ENCODE measurements at regions of chr9 and their contacts with region 1.

Region 1: DNA sequence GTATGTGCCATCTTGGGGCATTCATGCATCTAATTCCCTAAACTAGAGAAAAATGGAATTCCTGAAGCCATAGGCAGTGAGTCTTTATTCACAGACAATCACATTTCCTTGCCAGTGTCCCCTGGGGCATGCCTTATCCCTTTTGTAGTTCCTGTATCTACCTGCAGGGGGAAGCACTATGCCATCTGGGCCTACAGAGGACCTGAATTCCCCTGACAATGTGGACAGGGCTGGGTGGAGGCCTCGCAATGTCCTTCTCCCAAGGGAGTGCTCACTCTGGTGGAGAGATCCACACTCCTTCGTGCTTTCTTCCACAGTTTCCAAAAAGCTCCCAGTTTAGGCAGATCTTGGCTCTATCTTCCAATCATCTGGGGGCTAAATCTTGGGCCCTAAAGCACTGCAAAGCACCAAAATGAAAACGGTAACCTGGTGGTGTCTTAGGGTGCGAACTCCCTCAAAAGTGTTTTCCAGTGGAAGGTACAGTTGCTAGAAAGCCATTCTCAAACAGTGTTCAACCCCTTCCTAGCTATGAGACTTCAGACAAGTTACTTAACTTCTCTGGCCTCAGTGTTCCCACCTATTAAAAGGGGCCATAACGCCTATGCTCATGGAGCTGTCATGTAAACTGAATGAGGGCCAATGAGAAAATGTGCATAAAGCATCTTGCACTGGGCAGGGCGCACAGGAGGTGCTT is 17.5 kb downstream of the WHRN start:
- DNase-seq: peak; percentile 76
- ATAC-seq: peak; percentile 73
- H3K4me3 Mint-ChIP-seq: no peak overlapping the region
- H3K27ac Mint-ChIP-seq: no peak overlapping the region
- H3K4me1 Mint-ChIP-seq: peaks cover 26% of the 10 kb centered on the region
- H3K27me3 Mint-ChIP-seq: no peaks in the 10 kb centered on the region

Region 2: DNA sequence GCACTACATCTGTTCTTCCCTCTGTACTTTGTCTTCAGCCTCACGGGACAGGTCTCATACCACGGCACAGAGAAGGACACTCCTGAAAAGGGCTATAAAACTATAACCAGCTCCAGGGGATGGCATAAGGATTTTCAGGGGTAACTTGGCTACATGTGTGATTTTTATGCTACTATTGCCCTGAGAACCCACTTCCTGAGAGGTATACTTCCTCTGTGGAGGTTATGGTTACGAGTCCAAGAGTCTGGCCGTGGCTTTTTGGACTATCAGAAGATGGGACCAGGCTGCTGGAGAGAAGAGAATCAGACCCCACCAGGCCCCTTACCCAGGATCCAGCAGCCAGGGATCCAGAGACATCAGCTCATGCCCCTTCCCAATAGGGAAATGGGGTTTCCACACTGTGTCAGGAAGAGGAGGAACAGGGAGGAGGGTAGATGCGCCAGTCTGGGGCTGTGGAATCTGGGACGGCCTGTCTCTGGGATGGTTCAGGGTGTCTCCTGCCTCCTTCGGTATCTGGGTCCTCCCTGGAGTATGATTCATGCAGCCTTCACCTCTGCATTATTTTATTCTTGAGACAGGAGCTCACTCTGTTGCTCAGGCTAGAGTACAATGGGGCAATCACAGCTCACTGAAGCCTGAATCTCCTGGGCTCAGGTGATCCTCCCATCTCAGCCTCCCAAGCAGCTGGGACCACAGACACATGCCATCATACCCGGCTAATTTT is 12.2 kb before region 1 on chr9:
- CTCF ChIA-PET with region 1: interaction called, 16 read pairs
- POLR2A ChIA-PET with region 1: no interaction called
- DNase-seq: no peak
- ATAC-seq: peak; percentile 43
- H3K4me3 Mint-ChIP-seq: no peak overlapping the region
- H3K27ac Mint-ChIP-seq: peak overlapping the region; percentile 48
- H3K4me1 Mint-ChIP-seq: peaks cover 27% of the 10 kb centered on the region
- H3K27me3 Mint-ChIP-seq: no peaks in the 10 kb centered on the region

Region 3: GRCh38 chr9:114499528-114499927 is 11.8 kb after region 1 on chr9:
- CTCF ChIA-PET with region 1: interaction called, 145 read pairs
- POLR2A ChIA-PET with region 1: no interaction called
- DNase-seq: no peak
- ATAC-seq: no peak
- H3K4me3 Mint-ChIP-seq: no peak overlapping the region
- H3K27ac Mint-ChIP-seq: no peak overlapping the region
- H3K4me1 Mint-ChIP-seq: peaks cover 26% of the 10 kb centered on the region
- H3K27me3 Mint-ChIP-seq: peaks cover 33% of the 10 kb centered on the region

Region 4: DNA sequence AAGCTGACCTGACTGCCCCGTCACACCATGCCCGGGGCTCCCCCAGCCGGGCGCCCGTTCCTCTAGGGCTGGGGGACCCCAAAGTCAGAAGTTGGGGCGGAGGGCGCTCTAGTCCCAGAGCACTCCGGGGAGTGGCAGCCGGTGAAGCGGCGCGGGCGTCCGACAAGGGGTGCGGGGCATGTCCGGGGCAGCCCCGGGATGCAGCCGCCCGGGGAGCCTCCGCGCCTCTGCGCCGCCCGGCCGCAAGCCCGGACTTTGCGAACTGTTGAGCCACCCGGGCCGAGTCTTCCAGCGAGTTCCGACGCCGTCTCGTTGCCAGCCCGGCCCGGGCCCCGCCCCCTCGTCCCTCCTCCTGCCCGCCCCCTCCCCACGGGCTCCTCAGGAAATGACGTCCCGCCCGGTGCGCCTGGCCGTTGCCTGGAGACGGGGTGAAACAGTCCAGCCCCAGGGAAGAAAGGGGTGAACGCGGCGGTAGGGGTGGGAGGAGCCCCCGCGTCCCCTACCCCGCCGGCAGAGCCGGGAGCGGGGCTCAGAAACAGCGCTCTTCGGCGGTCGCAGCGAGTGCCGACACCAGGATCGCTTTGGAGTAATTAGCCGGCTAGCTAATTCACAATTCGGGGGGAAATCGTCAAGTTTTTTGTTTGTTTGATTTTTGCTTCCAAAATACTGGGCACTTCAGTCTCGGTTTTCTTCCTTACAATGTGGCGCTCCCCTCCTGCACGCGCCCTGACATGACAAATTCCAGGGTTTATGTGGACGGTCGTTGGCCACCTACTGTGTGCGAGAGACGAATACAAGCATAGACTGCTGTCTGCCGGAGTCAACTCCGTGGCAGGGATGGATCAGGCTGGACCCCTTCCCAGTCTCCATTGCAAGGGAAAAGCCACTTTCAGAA is 17.7 kb after region 1 on chr9 and contains the start of gene WHRN:
- CTCF ChIA-PET with region 1: interaction called, 145 read pairs
- POLR2A ChIA-PET with region 1: no interaction called
- DNase-seq: peak; percentile 91
- ATAC-seq: peak; percentile 84
- H3K4me3 Mint-ChIP-seq: peak within 1 kb of the TSS; percentile 75
- H3K27ac Mint-ChIP-seq: peak within 1 kb of the TSS; percentile 56
- H3K4me1 Mint-ChIP-seq: peaks cover 25% of the 10 kb centered on the region
- H3K27me3 Mint-ChIP-seq: peaks cover 63% of the 10 kb centered on the region
- total RNA-seq, gene WHRN: 2.6 to 4.1 TPM